PC-9 (cell line): ENCODE measurements at regions of chr1 and their contacts with region 1.

Region 1: DNA sequence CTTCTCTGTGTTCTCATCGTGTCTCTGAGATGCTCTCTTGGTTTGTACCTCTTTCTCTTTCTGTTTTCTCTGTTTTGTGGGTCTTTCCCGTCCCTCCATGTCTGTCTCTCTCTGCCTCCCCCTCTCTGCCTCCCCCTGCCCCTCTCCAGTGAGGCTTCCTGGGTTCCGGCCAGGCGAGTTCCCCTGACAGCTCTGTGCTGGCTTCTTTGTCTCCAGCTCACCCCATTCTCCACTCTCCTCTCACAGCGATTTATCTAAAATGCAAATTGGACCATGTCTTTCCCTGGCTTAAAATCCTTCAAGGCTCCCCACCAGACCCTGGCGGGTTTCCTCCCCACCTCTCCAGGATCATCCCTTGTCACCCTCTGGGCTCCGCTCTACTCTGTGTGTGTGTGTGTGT is 202.4 kb upstream of the POU3F1 start:
- DNase-seq: no peak
- H3K4me3 ChIP-seq: no peak overlapping the region
- H3K27ac ChIP-seq: no peak overlapping the region
- H3K4me1 ChIP-seq: no peaks in the 10 kb centered on the region; the same call in 1 of the 2 replicates
- H3K27me3 ChIP-seq: peaks cover 59% of the 10 kb centered on the region
- CTCF ChIP-seq: no peak

Region 2: GRCh38 chr1:38297842-38298241 is 48.8 kb after region 1 on chr1:
- CTCF ChIA-PET with region 1: no interaction called
- POLR2A ChIA-PET with region 1: no interaction called
- intact Hi-C with region 1: no loop called
- DNase-seq: no peak
- H3K4me3 ChIP-seq: no peak overlapping the region
- H3K27ac ChIP-seq: no peak overlapping the region
- H3K4me1 ChIP-seq: no peaks in the 10 kb centered on the region
- H3K27me3 ChIP-seq: peaks cover 82% of the 10 kb centered on the region
- CTCF ChIP-seq: no peak

Region 3: DNA sequence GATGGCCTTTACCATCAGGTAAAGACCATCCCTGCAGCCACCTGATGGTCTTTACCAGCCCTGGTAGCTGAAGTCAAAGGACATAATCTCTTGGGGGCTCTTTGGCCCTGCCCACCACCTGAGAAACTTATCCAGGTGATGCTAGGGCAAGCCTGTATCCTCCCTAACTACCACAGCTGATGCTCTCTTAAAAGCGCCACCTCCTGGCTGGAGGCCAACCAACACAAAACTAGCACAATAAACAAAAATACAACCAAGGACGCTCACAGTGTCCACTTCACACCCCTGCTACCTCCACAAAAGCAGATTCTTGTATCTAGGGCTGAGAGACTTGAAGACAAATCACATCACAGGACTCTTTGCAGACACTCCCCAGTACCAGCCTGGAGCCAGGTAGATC is 154.7 kb after region 1 on chr1:
- CTCF ChIA-PET with region 1: no interaction called
- POLR2A ChIA-PET with region 1: interaction called, 15 read pairs
- intact Hi-C with region 1: no loop called
- DNase-seq: no peak
- H3K4me3 ChIP-seq: no peak overlapping the region
- H3K27ac ChIP-seq: no peak overlapping the region
- H3K4me1 ChIP-seq: no peaks in the 10 kb centered on the region
- H3K27me3 ChIP-seq: no peaks in the 10 kb centered on the region
- CTCF ChIP-seq: no peak

Region 4: GRCh38 chr1:38444311-38444710 is 195.3 kb after region 1 on chr1:
- CTCF ChIA-PET with region 1: no interaction called
- POLR2A ChIA-PET with region 1: no interaction called
- intact Hi-C with region 1: no loop called
- DNase-seq: no peak
- H3K4me3 ChIP-seq: no peak overlapping the region
- H3K27ac ChIP-seq: no peak overlapping the region
- H3K4me1 ChIP-seq: no peaks in the 10 kb centered on the region
- H3K27me3 ChIP-seq: peaks cover 65% of the 10 kb centered on the region
- CTCF ChIP-seq: no peak

Region 5: DNA sequence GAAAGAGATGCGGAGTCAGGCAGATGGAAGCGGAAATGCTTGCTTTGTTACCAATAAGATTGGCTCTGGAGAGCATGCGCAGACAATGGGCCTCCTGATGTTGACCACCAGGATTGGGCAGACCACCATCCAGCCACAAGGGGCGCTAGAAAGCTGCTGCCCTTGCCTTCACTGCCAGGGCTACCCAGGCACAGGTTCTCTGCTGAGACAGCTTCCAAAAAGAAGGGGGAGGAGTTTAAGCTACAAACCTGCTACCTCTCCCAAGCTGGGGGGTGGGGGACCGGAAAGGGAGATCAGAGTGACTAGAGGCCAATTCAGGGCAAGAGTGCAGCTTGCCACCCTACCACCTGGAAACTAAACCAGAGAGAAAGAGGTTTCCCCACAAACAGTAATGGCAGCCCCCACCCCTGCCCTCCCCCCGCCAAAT is 240.9 kb after region 1 on chr1:
- CTCF ChIA-PET with region 1: no interaction called
- POLR2A ChIA-PET with region 1: no interaction called
- intact Hi-C with region 1: no loop called
- DNase-seq: peak in 1 of 2 experiments; percentile 17
- H3K4me3 ChIP-seq: no peak overlapping the region
- H3K27ac ChIP-seq: no peak overlapping the region
- H3K4me1 ChIP-seq: no peaks in the 10 kb centered on the region
- H3K27me3 ChIP-seq: peaks cover 70% of the 10 kb centered on the region
- CTCF ChIP-seq: peak; percentile 66